ENCODE measurements at regions of chr3 and their contacts with region 1.

Region 1: DNA sequence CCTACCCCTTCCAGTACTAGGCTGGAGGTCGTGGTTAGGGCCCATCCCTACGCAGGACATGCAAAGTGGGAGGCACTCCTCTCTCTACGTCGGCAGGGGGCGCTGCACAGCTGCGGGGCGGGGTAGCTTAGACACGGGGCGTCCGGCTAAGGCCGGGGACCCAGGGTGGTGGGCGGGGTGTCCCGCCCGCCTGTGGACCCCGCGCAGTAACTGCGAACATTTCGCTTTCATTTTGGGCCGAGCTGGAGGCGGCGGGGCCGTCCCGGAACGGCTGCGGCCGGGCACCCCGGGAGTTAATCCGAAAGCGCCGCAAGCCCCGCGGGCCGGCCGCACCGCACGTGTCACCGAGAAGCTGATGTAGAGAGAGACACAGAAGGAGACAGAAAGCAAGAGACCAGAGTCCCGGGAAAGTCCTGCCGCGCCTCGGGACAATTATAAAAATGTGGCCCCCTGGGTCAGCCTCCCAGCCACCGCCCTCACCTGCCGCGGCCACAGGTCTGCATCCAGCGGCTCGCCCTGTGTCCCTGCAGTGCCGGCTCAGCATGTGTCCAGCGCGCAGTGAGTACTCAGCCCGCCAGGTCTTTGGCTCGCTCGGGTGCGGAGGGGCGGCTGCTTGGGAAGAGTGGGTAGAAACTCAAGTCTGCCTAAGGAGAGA is at the start of gene IL12A:
- DNase-seq: peak; percentile 76
- H3K4me3 Mint-ChIP-seq: peak within 1 kb of the TSS; percentile 81
- H3K27ac Mint-ChIP-seq: peak within 1 kb of the TSS; percentile 27
- H3K4me1 Mint-ChIP-seq: peaks cover 24% of the 10 kb centered on the region
- H3K27me3 Mint-ChIP-seq: peaks cover 24% of the 10 kb centered on the region
- total RNA-seq, gene IL12A: 0.34 and 0.37 TPM in 2 replicates

Region 2: DNA sequence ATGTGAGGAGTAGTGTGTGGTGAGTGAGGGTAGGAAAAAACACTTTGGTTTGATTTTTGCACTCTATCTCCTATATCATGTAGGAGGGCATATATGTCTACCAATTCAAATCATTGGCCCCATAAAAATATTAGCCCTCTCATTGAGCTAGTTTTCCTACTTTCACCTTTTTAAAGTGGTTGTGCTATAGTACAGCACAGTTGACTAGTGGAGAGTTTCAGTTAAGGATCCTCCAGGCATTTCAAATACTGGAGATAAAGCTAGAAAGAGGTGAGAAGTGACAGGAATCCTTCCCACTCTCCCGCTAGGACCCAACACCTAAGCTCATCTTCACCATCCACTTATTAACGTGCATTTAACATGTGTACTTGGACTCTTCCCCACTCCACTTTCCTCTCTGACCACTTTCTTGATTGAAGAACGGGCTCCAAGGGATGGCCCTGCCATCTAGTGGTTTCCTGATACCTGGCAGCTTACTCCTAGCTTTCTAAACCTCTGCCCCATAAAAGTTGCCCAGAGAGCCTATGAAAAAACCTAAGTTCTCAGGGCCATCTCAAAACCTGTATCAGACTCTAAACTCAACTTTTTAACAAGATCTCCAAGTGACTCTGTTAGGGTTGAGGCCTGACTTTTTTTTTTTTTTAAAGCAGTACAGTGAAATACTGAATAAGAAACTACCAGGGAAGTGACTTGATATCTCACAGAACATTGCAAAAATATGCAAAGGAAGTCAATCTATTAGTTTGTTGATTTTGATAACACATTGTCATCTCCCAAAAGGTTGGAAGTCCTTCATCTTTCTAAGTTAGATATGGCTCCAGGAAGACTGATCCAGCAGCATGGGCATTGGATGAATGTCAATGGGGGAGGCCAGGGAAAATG is 17.8 kb after region 1 on chr3:
- intact Hi-C with region 1: loop called (anchors 1 kb)
- DNase-seq: no peak
- H3K4me3 Mint-ChIP-seq: no peak overlapping the region
- H3K27ac Mint-ChIP-seq: no peak overlapping the region
- H3K4me1 Mint-ChIP-seq: peaks cover 42% of the 10 kb centered on the region
- H3K27me3 Mint-ChIP-seq: no peaks in the 10 kb centered on the region

Region 3: DNA sequence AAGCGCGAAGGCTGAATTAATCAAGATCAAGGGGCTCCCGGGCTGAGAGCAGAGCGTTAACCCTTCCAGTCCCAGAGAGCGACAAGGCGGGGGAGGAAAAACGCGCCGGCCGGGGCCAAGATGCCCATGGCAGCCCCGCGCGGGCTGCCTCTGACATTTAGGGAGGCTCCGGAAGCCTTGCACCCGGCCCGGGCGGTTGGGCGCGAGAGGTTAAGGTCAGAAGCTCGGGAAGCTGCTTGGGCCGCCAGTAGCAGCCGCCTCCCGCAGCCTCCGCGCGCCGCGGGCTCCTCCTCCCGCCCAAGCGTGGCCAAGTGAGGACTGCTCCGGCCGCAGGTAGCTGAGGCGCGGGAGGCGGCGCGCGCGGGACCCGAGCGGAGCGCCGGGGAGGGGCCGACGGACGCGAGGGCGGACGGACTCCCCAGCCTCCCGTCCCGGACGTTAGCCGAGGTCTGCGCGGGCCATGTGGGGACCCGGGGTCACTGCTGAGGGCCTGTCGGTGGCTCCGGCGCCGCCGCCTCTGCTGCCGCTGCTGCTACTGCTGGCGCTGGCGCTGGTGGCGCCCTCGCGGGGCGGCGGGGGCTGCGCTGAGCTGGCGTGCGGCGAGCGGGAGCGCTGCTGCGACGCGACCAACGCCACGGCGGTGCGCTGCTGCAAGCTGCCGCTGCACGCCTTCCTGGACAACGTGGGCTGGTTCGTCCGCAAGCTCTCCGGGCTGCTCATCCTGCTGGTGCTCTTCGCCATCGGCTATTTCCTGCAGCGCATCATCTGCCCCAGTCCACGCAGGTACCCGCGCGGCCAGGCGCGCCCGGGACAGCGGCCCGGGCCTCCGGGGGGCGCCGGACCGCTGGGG is 236.7 kb after region 1 on chr3 and contains the start of gene C3orf80:
- intact Hi-C with region 1: loop called (anchors 5 kb)
- DNase-seq: peak; percentile 37
- H3K4me3 Mint-ChIP-seq: peak within 1 kb of the TSS; percentile 77
- H3K27ac Mint-ChIP-seq: peak within 1 kb of the TSS; percentile 40
- H3K4me1 Mint-ChIP-seq: peaks cover 14% of the 10 kb centered on the region
- H3K27me3 Mint-ChIP-seq: peaks cover 66% of the 10 kb centered on the region
- total RNA-seq, gene C3orf80: 0.18 and 0.42 TPM in 2 replicates

Region 4: DNA sequence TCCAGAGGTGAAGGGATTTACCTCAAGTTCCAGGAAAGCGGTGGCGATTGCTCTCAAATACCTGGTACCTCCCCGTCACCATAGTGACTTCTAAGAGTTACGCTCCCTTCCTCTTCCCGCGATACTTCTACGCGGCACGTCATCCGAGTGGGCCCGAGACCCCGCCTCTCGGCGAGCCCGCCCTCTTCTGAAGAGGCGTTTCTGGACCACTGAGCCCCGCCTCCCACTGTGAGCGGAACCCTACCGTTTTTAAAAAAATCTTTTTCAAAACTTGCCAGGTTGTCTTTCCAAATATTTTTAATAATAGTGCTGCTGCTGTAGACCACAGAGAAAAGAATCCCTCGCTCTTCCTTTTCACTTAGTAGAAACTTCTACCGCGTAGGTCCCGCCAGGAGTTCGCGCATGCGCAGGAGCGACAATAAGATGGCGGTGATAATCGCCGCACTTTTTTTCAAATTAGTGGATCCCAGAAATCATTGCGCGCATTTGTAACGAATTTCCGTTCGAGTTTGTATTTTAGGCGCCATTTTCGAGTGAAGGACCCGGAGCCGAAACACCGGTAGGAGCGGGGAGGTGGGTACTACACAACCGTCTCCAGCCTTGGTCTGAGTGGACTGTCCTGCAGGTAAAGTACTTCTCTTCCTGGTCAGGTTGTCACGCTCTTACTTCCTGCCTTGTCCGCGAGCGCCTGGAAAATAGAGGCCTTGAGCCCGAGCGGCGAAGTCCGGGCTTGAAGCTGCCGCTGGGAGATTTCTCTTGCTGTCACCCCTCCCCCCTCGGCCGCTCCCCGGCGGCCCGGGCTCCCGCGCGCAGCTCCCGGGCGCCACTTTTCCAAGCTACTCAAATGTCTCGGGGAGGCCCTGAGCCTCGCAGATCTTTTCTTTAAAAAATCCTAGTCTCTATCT is 410.6 kb after region 1 on chr3 and contains the starts of genes IFT80 and SMC4:
- intact Hi-C with region 1: loop called (anchors 1 kb)
- DNase-seq: peak; percentile 93
- H3K4me3 Mint-ChIP-seq: peak within 1 kb of the TSS; percentile 96
- H3K27ac Mint-ChIP-seq: peak within 1 kb of the TSS; percentile 98
- H3K4me1 Mint-ChIP-seq: peaks cover 57% of the 10 kb centered on the region
- H3K27me3 Mint-ChIP-seq: peaks cover 6% of the 10 kb centered on the region
- total RNA-seq, gene IFT80: 14.0 and 14.8 TPM in 2 replicates
- total RNA-seq, gene SMC4: 163 and 164 TPM in 2 replicates

Region 5: DNA sequence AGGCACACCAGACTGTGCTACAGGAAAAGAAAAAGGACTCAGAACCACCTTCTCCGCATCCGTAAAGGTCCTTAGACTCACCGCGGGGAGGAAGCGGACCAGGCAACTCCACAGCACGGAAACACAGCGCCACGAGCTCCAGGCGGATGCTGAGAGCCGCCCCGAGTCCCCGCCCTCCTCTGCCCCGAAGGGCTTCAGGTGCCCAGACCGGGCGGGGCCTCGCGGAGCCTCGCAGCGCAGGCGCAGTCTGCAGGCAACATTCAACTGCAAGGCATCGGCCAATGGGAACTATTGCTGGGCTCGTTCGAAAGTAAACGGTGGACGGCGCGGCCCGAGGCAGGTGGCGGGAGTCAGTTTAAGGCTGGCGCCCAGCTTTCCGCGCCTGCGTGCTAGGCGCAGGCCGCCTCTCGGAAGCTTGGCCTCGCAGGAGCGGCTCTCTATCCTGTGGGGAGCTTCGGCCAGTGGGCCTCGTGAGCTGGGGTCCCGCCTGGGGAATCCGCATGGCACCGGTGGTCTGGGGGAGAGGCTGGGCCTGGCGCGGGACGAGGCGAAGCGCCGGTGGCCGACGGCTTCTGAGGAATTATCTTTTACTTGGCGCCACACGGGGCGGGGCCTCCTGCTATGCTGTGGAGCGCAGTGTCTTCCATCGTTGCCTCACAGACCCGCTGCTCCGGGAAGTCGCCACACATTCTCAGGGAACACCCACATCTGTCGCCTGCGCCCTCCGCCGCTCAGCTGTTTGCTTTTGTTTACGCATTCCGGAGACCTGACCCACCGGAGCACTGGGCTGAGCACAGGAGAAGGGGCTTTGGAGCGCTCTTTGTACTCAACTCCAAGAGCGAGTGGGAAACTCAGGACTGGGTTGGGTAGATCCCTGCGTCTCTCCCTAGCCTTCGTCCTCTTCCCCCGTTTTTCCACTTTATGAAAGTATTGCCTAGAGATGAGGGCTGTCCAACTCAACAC is 461.2 kb after region 1 on chr3 and contains the start of gene TRIM59:
- intact Hi-C with region 1: loop called (anchors 1 kb)
- DNase-seq: peak; percentile 97
- H3K4me3 Mint-ChIP-seq: peak within 1 kb of the TSS; percentile 95
- H3K27ac Mint-ChIP-seq: peak within 1 kb of the TSS; percentile 95
- H3K4me1 Mint-ChIP-seq: peaks cover 29% of the 10 kb centered on the region
- H3K27me3 Mint-ChIP-seq: peaks cover 6% of the 10 kb centered on the region
- total RNA-seq, gene TRIM59: 33.1 and 33.2 TPM in 2 replicates

Region 6: DNA sequence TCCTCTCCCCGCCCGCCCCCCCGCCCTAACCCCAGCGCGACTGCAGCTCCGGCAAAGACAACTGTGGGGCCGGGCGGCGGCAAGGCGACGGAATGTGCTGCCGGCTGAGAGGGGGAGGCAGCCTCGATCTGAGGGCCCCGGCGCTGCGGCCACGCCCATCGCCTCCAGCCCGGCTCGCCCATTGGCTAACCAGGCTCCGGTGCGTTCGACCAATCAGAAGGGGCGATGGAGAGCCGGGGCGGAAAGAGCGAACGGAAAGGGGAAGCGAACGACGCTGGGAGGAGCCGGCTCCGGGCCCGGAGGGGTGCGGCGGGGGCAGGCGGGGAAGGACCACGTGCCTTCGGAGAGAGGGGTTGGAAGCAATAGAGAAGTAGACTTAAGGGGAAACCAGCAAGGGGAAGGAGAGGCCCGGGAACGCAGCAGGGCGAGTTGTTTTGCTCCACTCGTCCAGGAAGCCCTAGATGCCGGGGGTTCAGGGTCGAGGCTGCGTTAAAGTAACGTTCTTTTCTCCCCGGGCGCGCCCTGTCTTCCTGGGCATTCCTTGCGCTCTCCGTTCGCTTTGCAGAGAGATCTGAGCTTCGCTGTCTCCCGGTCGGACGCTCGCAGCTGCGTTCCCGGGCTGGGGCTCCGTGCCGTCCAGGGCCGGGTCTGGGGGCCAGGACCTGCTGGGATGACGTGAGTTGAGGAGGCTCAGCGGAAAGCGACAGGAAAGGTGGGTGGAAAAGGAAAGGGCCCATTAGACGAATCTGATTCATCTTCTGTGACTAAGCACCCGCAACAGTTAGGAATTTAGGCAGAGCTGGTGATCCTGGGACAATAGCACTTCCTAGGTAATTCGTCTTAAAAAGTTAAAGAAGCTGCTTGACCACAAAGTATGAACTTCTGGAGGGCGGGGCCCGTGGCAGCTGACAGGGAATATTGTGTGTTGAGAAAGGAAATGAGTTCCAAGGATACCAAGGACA is 577.0 kb after region 1 on chr3 and contains the start of gene KPNA4:
- intact Hi-C with region 1: loop called (anchors 2 kb)
- DNase-seq: peak; percentile 96
- H3K4me3 Mint-ChIP-seq: peak within 1 kb of the TSS; percentile 97
- H3K27ac Mint-ChIP-seq: peak within 1 kb of the TSS; percentile 96
- H3K4me1 Mint-ChIP-seq: peaks cover 58% of the 10 kb centered on the region
- H3K27me3 Mint-ChIP-seq: no peaks in the 10 kb centered on the region
- total RNA-seq, gene KPNA4: 73.5 and 77.7 TPM in 2 replicates

Region 7: DNA sequence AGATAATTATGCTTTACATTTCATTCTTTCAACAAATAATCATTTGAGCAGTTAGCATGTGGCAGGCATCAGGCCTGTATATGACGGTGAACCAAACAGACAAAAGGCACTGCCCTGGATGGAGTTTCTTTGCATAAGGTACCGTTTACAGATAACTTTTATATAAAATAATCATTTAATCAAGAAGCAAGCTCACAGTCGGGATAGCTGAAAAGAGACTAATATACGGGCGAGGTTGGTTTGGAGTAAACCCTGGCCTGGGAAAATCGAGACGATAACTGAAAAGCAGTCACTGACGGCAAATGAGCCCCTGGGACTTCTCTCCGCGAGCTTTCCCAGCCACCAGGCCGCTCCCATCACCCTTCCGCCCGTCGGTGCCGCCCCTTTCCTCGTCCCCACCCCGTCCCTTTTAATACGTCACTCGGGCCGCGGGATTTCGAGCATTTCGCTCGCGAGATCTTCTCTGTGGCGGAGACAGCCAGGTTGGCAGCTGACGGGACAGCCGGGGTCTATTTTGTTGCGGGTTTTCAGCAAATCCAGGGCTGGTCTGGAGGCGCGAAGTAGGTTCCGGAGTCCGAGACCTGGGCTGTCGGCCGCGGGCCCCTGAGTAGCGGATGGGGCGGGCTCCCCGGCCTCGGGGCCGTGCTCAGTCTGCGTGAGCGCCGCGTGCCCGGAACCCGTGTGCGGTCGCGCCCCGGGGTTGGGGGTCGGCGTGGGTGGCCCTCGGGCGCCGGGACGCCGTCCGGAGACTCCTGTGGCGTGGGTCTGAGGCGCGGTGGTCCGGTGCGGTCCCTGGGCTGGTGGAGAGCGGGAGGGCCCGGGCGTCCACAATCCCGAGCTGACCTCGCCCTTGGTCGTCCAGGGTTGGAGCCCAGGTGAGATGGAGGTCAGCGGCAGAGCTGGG is 1232.4 kb after region 1 on chr3 and contains the start of gene NMD3:
- intact Hi-C with region 1: loop called (anchors 10 kb)
- DNase-seq: peak; percentile 88
- H3K4me3 Mint-ChIP-seq: peak within 1 kb of the TSS; percentile 94
- H3K27ac Mint-ChIP-seq: peak within 1 kb of the TSS; percentile 93
- H3K4me1 Mint-ChIP-seq: peaks cover 31% of the 10 kb centered on the region
- H3K27me3 Mint-ChIP-seq: peaks cover 10% of the 10 kb centered on the region
- total RNA-seq, gene NMD3: 74.5 and 79.6 TPM in 2 replicates